GM12878 (cell line): ENCODE measurements at regions of chr5 and their contacts with region 1.

Region 1: DNA sequence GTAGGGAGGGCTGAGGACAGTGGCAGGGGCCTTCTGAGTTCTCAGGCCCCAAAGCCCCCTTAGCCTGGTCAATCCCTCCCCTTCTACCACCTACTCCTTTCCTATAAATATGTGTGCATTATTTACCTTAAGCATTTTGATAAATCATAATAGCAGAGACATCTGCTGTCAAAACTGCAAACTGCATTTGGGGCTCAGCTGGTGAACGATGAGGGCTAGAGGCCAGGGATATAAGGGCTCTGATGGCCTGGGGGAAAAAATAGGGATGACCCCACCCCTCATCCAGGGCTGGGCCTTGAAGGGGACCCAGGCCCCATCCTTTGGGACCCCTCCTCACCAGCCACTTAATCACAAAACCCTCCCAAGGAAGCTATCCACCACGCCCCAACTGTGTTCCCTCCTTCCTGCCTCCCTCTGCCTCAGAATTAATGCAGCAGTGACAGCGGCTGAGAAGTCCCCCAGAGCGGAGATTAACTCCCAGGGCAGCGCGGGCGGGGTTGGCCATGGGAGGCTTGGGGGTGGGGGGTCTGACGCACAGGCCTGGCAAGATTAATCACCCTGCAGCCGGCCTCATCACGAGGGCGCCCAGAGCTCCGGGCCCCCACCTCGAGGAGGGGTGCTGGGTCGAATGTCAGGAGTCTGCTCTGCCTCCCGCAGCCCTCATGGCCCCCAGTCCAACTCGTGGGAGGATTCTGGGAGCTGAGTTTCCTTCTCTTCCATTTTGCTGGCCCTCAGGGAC is 42.1 kb downstream of the CXXC5 start:
- DNase-seq: no peak
- ATAC-seq: peak; percentile 77
- H3K4me3 ChIP-seq: no peak overlapping the region
- H3K27ac ChIP-seq: no peak overlapping the region
- H3K4me1 ChIP-seq: peaks cover 12% of the 10 kb centered on the region
- H3K27me3 ChIP-seq: no peaks in the 10 kb centered on the region
- CTCF ChIP-seq: peak; percentile 61 to 83 (median 75); a peak in 5 of 6 replicates
- EP300 ChIP-seq: no peak
- POLR2A ChIP-seq: no peak
- RAD21 ChIP-seq: peak; percentile 90

Region 2: GRCh38 chr5:139651853-139652787 is 38.1 kb before region 1 on chr5:
- CTCF ChIA-PET with region 1: interaction called, 13 read pairs
- POLR2A ChIA-PET with region 1: interaction called, 3 read pairs
- RAD21 ChIA-PET with region 1: interaction called, 42 read pairs
- SMC1A ChIA-PET with region 1: interaction called, 6 read pairs
- in situ Hi-C with region 1: no loop called
- intact Hi-C with region 1: loop called (anchors 5 kb)
- DNase-seq: peak; percentile 85
- ATAC-seq: peak; percentile 51
- H3K4me3 ChIP-seq: peak overlapping the region; percentile 96
- H3K27ac ChIP-seq: peak overlapping the region; percentile 91
- H3K4me1 ChIP-seq: peaks cover 59% of the 10 kb centered on the region
- H3K27me3 ChIP-seq: no peaks in the 10 kb centered on the region
- CTCF ChIP-seq: no peak
- EP300 ChIP-seq: peak; percentile 55 to 62; a peak in 2 of 4 replicates
- POLR2A ChIP-seq: no peak
- RAD21 ChIP-seq: no peak

Region 3: GRCh38 chr5:139670369-139671095 is 19.7 kb before region 1 on chr5:
- CTCF ChIA-PET with region 1: interaction called, 54 read pairs
- POLR2A ChIA-PET with region 1: interaction called, 4 read pairs
- RAD21 ChIA-PET with region 1: interaction called, 20 read pairs
- SMC1A ChIA-PET with region 1: interaction called, 34 read pairs
- in situ Hi-C with region 1: no loop called
- intact Hi-C with region 1: no loop called
- DNase-seq: peak; percentile 90
- ATAC-seq: peak; percentile 59
- H3K4me3 ChIP-seq: peak overlapping the region; percentile 84
- H3K27ac ChIP-seq: peak overlapping the region; percentile 99
- H3K4me1 ChIP-seq: peaks cover 54% of the 10 kb centered on the region
- H3K27me3 ChIP-seq: no peaks in the 10 kb centered on the region
- CTCF ChIP-seq: peak; percentile 52 to 65 (median 53)
- EP300 ChIP-seq: peak in 1 of 2 experiments; percentile 37; a peak in 1 of 4 replicates
- POLR2A ChIP-seq: no peak
- RAD21 ChIP-seq: peak; percentile 34

Region 4: DNA sequence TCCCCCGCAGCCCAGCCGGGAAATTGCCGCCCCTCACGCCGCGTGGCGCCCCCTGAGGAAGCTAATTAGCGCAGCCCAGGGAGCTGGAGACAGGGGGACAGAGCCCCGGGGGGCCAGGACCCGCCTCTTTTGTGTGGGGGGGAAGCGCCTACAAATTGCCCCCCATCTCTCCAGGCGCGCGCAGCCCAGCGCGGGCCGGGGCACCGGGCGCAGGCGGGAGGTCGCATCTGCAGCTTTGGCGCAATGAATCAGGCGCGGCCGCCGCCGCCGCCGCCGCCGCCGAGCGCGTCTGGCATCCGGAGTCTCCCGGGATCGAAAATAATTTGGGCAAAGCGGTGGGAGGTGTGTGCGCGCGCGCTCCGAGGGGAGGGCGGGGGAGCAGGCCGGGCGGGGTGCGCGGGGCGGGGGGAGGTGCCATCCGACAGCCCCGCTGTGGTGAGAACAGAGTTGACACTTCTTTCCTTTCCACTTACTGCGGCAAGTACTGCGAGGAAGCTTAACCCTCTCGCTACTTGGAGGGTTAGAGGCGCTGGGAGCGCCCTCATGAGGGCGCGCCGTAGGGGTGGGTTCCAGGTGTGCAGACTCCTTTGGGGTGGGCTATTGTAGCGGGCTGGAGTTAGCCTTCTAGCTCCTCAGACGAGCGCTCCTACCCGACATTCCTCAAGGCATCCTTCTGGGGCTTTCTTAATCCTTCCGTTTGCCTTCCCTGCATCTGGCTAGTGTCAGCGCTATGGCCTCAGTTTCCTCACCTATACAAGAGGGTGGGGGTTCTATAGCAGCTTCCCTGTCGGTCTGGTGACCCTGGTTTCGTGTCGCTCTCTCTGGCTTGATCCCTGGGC is 21.1 kb after region 1 on chr5:
- CTCF ChIA-PET with region 1: interaction called, 15 read pairs
- POLR2A ChIA-PET with region 1: interaction called, 3 read pairs
- RAD21 ChIA-PET with region 1: interaction called, 32 read pairs
- SMC1A ChIA-PET with region 1: interaction called, 18 read pairs
- in situ Hi-C with region 1: no loop called
- intact Hi-C with region 1: no loop called
- DNase-seq: no peak
- ATAC-seq: peak; percentile 72
- H3K4me3 ChIP-seq: peak overlapping the region; percentile 75
- H3K27ac ChIP-seq: no peak overlapping the region
- H3K4me1 ChIP-seq: peaks cover 21% of the 10 kb centered on the region
- H3K27me3 ChIP-seq: peaks cover 5 to 6% of the 10 kb centered on the region in 2 experiments; a peak in 3 of 4 replicates
- CTCF ChIP-seq: peak; percentile 4 to 38 (median 29); a peak in 3 of 6 replicates
- EP300 ChIP-seq: no peak
- POLR2A ChIP-seq: no peak
- RAD21 ChIP-seq: peak; percentile 39

Region 5: GRCh38 chr5:139765409-139766217 is 75.4 kb after region 1 on chr5:
- CTCF ChIA-PET with region 1: interaction called, 65 read pairs
- POLR2A ChIA-PET with region 1: no interaction called
- RAD21 ChIA-PET with region 1: interaction called, 24 read pairs
- SMC1A ChIA-PET with region 1: interaction called, 9 read pairs
- in situ Hi-C with region 1: no loop called
- intact Hi-C with region 1: loop called (anchors 2 kb)
- DNase-seq: no peak
- ATAC-seq: peak; percentile 94
- H3K4me3 ChIP-seq: peak overlapping the region; percentile 71; the same call in 1 of the 2 replicates
- H3K27ac ChIP-seq: no peak overlapping the region
- H3K4me1 ChIP-seq: no peaks in the 10 kb centered on the region
- H3K27me3 ChIP-seq: peaks cover 11 to 14% of the 10 kb centered on the region in 2 experiments
- CTCF ChIP-seq: peak; percentile 57 to 93 (median 86)
- EP300 ChIP-seq: no peak
- POLR2A ChIP-seq: no peak
- RAD21 ChIP-seq: peak; percentile 77

Region 6: GRCh38 chr5:139895647-139896046 is 205.4 kb after region 1 on chr5:
- CTCF ChIA-PET with region 1: no interaction called
- POLR2A ChIA-PET with region 1: no interaction called
- RAD21 ChIA-PET with region 1: no interaction called
- SMC1A ChIA-PET with region 1: no interaction called
- in situ Hi-C with region 1: no loop called
- intact Hi-C with region 1: no loop called
- DNase-seq: no peak
- ATAC-seq: no peak
- H3K4me3 ChIP-seq: no peak overlapping the region
- H3K27ac ChIP-seq: no peak overlapping the region
- H3K4me1 ChIP-seq: no peaks in the 10 kb centered on the region
- H3K27me3 ChIP-seq: no peaks in the 10 kb centered on the region
- CTCF ChIP-seq: no peak
- EP300 ChIP-seq: no peak
- POLR2A ChIP-seq: no peak
- RAD21 ChIP-seq: no peak